Aorta (tissue), 5 donors: ENCODE measurements at regions of chr12 and their contacts with region 1.

Region 1: DNA sequence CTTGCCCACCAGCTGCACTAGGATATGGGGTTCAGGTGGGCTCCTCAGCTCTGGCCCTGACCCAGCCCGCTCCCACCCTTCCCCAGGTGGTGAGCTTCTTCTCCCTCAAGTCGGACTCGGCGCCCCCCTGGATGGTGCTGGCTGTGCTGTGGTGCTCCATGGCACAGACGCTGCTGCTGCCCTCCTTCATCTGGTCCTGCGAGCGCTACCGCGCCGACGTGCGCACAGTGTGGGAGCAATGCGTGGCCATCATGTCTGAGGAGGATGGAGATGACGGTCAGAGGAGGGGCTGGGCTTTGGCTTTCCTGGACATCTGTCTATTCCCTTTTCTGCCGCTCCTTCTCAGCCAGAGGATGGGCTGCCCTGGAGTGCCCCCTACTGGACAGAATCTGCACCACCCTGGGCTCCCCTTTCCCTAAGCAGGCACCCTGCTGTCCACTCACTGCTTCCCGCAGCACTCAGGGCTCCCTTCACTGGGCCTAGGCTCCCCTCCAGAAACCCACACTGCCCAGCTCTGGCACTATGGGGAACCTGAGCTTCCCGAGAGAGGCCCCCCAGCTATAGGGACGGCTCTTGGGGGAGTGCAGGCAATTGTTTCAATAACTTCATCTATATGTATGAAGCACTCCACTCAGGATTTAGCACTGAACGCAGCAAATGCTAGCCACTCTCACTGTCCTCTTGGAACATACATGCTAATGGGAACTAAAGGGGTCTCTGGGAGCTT is 2.6 kb upstream of the P3H3 start:
- DNase-seq: peak; percentile 90 to 95
- ATAC-seq: peak; percentile 84
- H3K4me3 ChIP-seq: no peak overlapping the region
- H3K27ac ChIP-seq: no peak overlapping the region
- H3K4me1 ChIP-seq: no peaks in the 10 kb centered on the region
- H3K27me3 ChIP-seq: no peaks in the 10 kb centered on the region

Region 2: DNA sequence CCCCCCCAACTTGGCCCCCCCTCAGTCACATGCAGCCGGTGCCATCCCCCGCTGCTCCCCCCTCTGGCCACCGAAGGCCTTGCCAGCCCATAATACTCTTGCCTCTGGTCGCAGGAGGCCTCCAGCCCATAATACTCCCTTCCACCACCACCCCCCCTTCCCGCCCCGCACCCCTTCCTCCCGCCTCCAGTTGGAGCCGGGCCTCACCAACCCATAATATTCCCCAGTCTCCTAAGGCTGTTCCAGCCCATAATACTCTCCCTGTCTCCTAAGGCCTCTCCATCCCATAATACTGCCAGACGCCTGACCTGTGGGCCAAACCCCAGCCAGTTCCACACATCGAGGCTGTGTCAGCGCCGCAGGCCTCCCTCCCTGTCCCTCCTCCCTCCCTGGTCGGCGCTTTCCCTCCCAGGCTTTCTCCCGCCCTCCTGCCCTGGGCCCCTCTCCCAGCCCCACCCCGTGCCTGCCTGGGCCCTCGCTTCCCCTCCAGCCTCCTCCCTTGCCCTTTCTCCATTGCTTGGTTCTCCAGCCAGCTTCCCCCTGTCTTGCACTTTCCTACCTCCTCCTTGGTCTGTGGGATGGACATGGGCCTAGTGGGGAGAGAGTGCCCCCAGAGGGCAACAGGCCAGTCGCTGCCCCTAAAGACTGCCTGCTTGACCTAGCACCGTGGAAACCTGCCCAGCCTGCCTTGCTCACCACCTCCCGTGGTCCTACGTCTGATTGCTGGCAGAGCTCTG is 211.6 kb before region 1 on chr12:
- intact Hi-C with region 1: loop called (anchors 5 to 10 kb)
- DNase-seq: peak; percentile 95 to 96
- ATAC-seq: peak; percentile 93
- H3K4me3 ChIP-seq: no peak overlapping the region
- H3K27ac ChIP-seq: peak overlapping the region in 1 of 2 donors; percentile 89
- H3K4me1 ChIP-seq: peaks cover 2 to 3% of the 10 kb centered on the region in 2 donors
- H3K27me3 ChIP-seq: no peaks in the 10 kb centered on the region

Region 3: GRCh38 chr12:6730169-6730568 is 95.4 kb before region 1 on chr12:
- intact Hi-C with region 1: loop called in 1 of 2 experiments (anchors 5 kb)
- DNase-seq: no peak
- ATAC-seq: no peak
- H3K4me3 ChIP-seq: no peak overlapping the region
- H3K27ac ChIP-seq: no peak overlapping the region
- H3K4me1 ChIP-seq: no peaks in the 10 kb centered on the region
- H3K27me3 ChIP-seq: no peaks in the 10 kb centered on the region

Region 4: GRCh38 chr12:6752921-6753771 is 72.4 kb before region 1 on chr12 and contains the start of gene MLF2:
- intact Hi-C with region 1: loop called (anchors 5 kb)
- DNase-seq: peak; percentile 99
- ATAC-seq: peak; percentile 98
- H3K4me3 ChIP-seq: peak within 1 kb of the TSS; percentile 50 to 86
- H3K27ac ChIP-seq: peak within 1 kb of the TSS; percentile 62 to 96
- H3K4me1 ChIP-seq: no peaks in the 10 kb centered on the region
- H3K27me3 ChIP-seq: no peaks in the 10 kb centered on the region
- total RNA-seq, gene MLF2: 110 to 144 TPM